CD4-positive, alpha-beta memory T cell (primary cell): ENCODE measurements at regions of chr15 and their contacts with region 1.

Region 1: GRCh38 chr15:63487076-63487757 is 17.2 kb upstream of the USP3 start:
- DNase-seq: peak; percentile 82 to 87 (median 84)
- H3K4me3 ChIP-seq: no peak overlapping the region
- H3K4me3 Mint-ChIP-seq: peak overlapping the region in 7 of 8 donors; percentile 69 to 89 (median 72)
- H3K27ac ChIP-seq: peak overlapping the region; percentile 41
- H3K27ac Mint-ChIP-seq: peak overlapping the region; percentile 78 to 93 (median 89)
- H3K4me1 ChIP-seq: peaks cover 69% of the 10 kb centered on the region
- H3K4me1 Mint-ChIP-seq: peaks cover 40 to 81% (median 59%) of the 10 kb centered on the region in 4 donors
- H3K27me3 ChIP-seq: no peaks in the 10 kb centered on the region
- H3K27me3 Mint-ChIP-seq: no peaks in the 10 kb centered on the region

Region 2: DNA sequence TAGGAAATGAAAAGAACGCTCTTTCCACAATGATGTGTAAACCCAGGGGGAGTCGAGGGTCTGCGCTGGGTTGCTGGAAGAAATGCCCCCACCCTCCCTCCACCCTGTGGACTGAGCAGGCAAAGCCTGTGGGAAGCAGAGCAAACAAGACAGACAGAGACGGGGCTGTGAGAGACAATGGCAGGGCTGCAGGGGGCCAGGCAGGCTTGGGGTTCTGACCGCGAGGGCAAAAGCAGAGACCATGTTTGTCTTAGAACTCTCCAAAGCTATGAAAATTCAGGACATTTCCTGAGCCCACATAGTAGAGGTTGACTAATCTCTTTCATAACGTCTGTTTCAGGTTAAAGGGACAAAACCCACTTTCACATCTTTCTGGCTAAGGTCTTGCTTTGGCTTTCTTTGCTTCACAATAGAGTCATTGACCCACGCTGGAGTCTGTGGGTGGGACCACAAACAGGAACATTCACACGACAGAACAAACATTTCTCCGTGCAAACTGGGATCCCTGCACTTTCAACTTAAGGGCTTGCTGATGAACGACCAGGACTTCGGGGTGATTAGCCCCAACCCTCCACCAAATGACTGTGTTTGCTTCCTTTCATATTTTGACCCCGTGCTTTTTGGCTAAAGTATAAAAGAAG is 600.7 kb before region 1 on chr15:
- CTCF ChIA-PET with region 1: no interaction called
- POLR2A ChIA-PET with region 1: no interaction called
- intact Hi-C with region 1: no loop called
- DNase-seq: no peak
- H3K4me3 ChIP-seq: no peak overlapping the region
- H3K4me3 Mint-ChIP-seq: no peak overlapping the region
- H3K27ac ChIP-seq: no peak overlapping the region
- H3K27ac Mint-ChIP-seq: no peak overlapping the region
- H3K4me1 ChIP-seq: no peaks in the 10 kb centered on the region
- H3K4me1 Mint-ChIP-seq: no peaks in the 10 kb centered on the region
- H3K27me3 ChIP-seq: no peaks in the 10 kb centered on the region
- H3K27me3 Mint-ChIP-seq: peaks cover 15 to 24% of the 10 kb centered on the region in 2 donors

Region 3: DNA sequence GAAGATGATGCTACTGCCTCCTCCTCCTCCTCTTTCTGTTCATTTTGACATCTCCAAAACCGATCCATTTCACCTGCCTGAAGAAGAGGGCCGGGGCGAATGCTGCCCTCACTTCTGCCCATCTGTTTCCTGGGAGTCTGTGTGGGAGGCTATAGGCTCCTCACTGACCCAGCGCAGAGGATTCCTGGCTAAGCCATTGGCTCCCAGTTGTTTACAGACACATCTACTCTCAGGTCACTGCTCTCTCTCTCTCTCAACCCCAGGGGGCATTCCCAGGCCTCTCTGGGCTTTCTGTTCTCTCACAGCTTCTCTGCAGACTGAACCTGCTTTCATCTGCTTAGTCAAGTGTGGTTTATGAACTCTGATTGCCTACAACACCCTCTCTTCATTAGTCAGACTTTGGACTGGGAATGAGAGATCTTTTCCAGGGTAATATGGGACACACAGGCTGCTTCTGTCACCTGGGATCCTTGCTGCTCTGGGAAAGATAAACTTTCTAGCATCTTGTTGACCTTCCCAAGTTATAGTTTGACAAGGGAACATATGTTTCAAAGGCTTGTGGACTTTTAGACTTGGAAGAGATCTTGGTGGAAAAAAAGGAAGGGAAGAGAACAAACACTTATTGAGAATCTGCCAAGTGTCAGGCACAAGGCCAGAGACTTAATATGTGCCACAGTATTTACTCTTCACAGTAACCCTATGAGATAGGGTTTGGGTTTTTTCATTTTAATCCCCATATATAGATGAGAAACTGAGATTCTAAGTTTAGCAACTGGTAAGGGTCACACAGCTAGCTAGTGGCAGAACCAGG is 13.0 kb before region 1 on chr15:
- CTCF ChIA-PET with region 1: interaction called, 77 read pairs
- POLR2A ChIA-PET with region 1: interaction called, 7 read pairs
- intact Hi-C with region 1: loop called (anchors 1 kb)
- DNase-seq: peak in 4 of 5 donors; percentile 51 to 87 (median 60)
- H3K4me3 ChIP-seq: no peak overlapping the region
- H3K4me3 Mint-ChIP-seq: peak overlapping the region in 6 of 8 donors; percentile 62 to 86 (median 78)
- H3K27ac ChIP-seq: peak overlapping the region; percentile 43
- H3K27ac Mint-ChIP-seq: peak overlapping the region; percentile 87 to 99 (median 97)
- H3K4me1 ChIP-seq: peaks cover 59% of the 10 kb centered on the region
- H3K4me1 Mint-ChIP-seq: peaks cover 38 to 58% (median 54%) of the 10 kb centered on the region in 4 donors
- H3K27me3 ChIP-seq: no peaks in the 10 kb centered on the region
- H3K27me3 Mint-ChIP-seq: no peaks in the 10 kb centered on the region

Region 4: DNA sequence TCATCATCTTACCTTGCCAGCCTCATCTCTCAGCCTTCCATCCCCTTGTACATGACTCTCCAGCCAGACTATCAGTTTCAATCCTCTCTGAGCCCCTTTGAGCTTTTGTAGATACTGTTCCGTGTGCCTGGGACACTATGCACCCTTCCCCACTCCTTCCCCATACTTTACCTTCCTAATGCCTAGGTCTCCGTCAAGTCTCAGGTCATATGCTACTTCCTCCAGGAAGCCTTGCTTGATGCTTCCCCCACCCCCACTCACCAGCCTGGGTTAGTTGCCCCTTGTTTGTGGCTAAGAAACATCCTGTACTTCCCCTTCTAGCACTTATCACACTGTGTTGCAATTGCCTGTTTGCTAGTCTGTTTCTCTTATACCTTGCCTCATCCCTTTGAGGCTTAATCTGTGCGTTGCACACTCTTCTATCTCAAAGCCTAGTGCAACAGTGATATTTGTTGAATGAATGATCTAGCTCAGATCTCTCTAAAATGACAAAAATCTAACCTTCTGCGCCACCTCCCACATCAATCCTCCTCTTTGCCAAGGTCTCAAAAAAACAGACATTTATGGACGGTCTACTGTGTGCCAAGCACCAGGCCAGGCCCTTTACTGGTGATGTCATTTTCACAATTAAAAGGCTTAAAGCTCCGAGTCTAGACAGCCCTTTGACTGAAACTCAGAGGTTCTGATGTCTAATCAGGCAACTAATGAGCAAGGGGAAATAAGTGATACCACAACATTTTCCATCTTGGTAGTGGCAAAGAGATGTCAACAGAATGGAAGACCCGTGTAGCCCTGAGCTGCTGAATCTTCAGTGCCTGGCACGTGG is 10.6 kb after region 1 on chr15:
- CTCF ChIA-PET with region 1: interaction called, 224 read pairs
- POLR2A ChIA-PET with region 1: interaction called, 906 read pairs
- intact Hi-C with region 1: loop called (anchors 1 kb)
- DNase-seq: peak; percentile 81 to 94 (median 83)
- H3K4me3 ChIP-seq: peak overlapping the region in 1 of 2 donors; percentile 42
- H3K4me3 Mint-ChIP-seq: no peak overlapping the region
- H3K27ac ChIP-seq: peak overlapping the region; percentile 81
- H3K27ac Mint-ChIP-seq: no peak overlapping the region
- H3K4me1 ChIP-seq: peaks cover 96% of the 10 kb centered on the region
- H3K4me1 Mint-ChIP-seq: peaks cover 34 to 82% (median 62%) of the 10 kb centered on the region in 4 donors
- H3K27me3 ChIP-seq: no peaks in the 10 kb centered on the region
- H3K27me3 Mint-ChIP-seq: no peaks in the 10 kb centered on the region

Region 5: GRCh38 chr15:63514531-63514943 is 27.3 kb after region 1 on chr15:
- CTCF ChIA-PET with region 1: interaction called, 24 read pairs
- POLR2A ChIA-PET with region 1: interaction called, 8 read pairs
- intact Hi-C with region 1: no loop called
- DNase-seq: no peak
- H3K4me3 ChIP-seq: no peak overlapping the region
- H3K4me3 Mint-ChIP-seq: peak overlapping the region in 7 of 8 donors; percentile 33 to 84 (median 59)
- H3K27ac ChIP-seq: no peak overlapping the region
- H3K27ac Mint-ChIP-seq: peak overlapping the region; percentile 19 to 91 (median 70)
- H3K4me1 ChIP-seq: peaks cover 100% of the 10 kb centered on the region
- H3K4me1 Mint-ChIP-seq: peaks cover 67 to 97% (median 87%) of the 10 kb centered on the region in 4 donors
- H3K27me3 ChIP-seq: no peaks in the 10 kb centered on the region
- H3K27me3 Mint-ChIP-seq: no peaks in the 10 kb centered on the region

Region 6: GRCh38 chr15:63522225-63522578 is 35.0 kb after region 1 on chr15:
- CTCF ChIA-PET with region 1: interaction called, 12 read pairs
- POLR2A ChIA-PET with region 1: interaction called, 5 read pairs
- intact Hi-C with region 1: no loop called
- DNase-seq: no peak
- H3K4me3 ChIP-seq: no peak overlapping the region
- H3K4me3 Mint-ChIP-seq: peak overlapping the region in 6 of 8 donors; percentile 6 to 78 (median 60)
- H3K27ac ChIP-seq: no peak overlapping the region
- H3K27ac Mint-ChIP-seq: peak overlapping the region in 4 of 7 donors; percentile 30 to 83 (median 35)
- H3K4me1 ChIP-seq: peaks cover 98% of the 10 kb centered on the region
- H3K4me1 Mint-ChIP-seq: peaks cover 73 to 98% (median 87%) of the 10 kb centered on the region in 4 donors
- H3K27me3 ChIP-seq: no peaks in the 10 kb centered on the region
- H3K27me3 Mint-ChIP-seq: no peaks in the 10 kb centered on the region

Region 7: GRCh38 chr15:63531586-63531985 is 44.4 kb after region 1 on chr15:
- CTCF ChIA-PET with region 1: interaction called, 16 read pairs
- POLR2A ChIA-PET with region 1: interaction called, 3 read pairs
- intact Hi-C with region 1: no loop called
- DNase-seq: no peak
- H3K4me3 ChIP-seq: no peak overlapping the region
- H3K4me3 Mint-ChIP-seq: peak overlapping the region in 5 of 8 donors; percentile 21 to 59 (median 35)
- H3K27ac ChIP-seq: no peak overlapping the region
- H3K27ac Mint-ChIP-seq: peak overlapping the region in 5 of 7 donors; percentile 16 to 65 (median 25)
- H3K4me1 ChIP-seq: peaks cover 93% of the 10 kb centered on the region
- H3K4me1 Mint-ChIP-seq: peaks cover 70 to 95% (median 86%) of the 10 kb centered on the region in 4 donors
- H3K27me3 ChIP-seq: no peaks in the 10 kb centered on the region
- H3K27me3 Mint-ChIP-seq: no peaks in the 10 kb centered on the region

Region 8: GRCh38 chr15:63544258-63545026 is 57.2 kb after region 1 on chr15:
- CTCF ChIA-PET with region 1: interaction called, 15 read pairs
- POLR2A ChIA-PET with region 1: interaction called, 4 read pairs
- intact Hi-C with region 1: loop called (anchors 5 kb)
- DNase-seq: no peak
- H3K4me3 ChIP-seq: no peak overlapping the region
- H3K4me3 Mint-ChIP-seq: peak overlapping the region in 5 of 8 donors; percentile 51 to 58 (median 52)
- H3K27ac ChIP-seq: no peak overlapping the region
- H3K27ac Mint-ChIP-seq: peak overlapping the region; percentile 4 to 81 (median 58)
- H3K4me1 ChIP-seq: peaks cover 29% of the 10 kb centered on the region
- H3K4me1 Mint-ChIP-seq: peaks cover 40 to 69% (median 47%) of the 10 kb centered on the region in 4 donors
- H3K27me3 ChIP-seq: no peaks in the 10 kb centered on the region
- H3K27me3 Mint-ChIP-seq: no peaks in the 10 kb centered on the region